Panc1 (cell line): ENCODE measurements at regions of chr20 and their contacts with region 1.

Region 1: DNA sequence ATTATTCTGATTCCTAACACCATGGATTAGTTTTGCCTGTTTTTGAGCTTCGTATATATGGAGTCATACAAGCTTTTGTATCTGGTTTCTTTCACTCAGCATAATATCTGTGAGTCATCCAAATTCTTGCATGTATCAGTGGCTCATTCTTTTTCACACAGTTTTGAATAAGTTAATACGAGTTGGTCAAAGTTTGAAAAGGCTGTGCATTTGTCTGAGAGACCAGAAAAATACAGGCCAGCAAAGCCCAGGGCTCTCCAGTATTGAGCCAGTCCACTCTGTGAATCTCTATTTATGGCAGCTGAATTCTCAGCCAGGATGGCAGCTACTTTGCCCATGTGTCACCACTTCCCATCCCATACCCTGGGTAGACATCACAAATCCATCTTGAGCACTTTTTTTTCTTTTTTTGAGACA is 7.2 kb upstream of the CHMP4B start:
- DNase-seq: no peak
- ATAC-seq: peak; percentile 65; the same call in 1 of the 2 replicates
- H3K4me3 ChIP-seq: no peak overlapping the region
- H3K27ac ChIP-seq: no peak overlapping the region
- H3K4me1 ChIP-seq: no peaks in the 10 kb centered on the region
- H3K27me3 ChIP-seq: no peaks in the 10 kb centered on the region
- CTCF ChIP-seq: no peak

Region 2: GRCh38 chr20:33475381-33476150 is 328.4 kb before region 1 on chr20:
- CTCF ChIA-PET with region 1: no interaction called
- POLR2A ChIA-PET with region 1: interaction called, 12 read pairs
- in situ Hi-C with region 1: no loop called
- intact Hi-C with region 1: no loop called
- DNase-seq: no peak
- ATAC-seq: no peak
- H3K4me3 ChIP-seq: no peak overlapping the region
- H3K27ac ChIP-seq: no peak overlapping the region
- H3K4me1 ChIP-seq: no peaks in the 10 kb centered on the region
- H3K27me3 ChIP-seq: no peaks in the 10 kb centered on the region
- CTCF ChIP-seq: no peak

Region 3: GRCh38 chr20:33781133-33781532 is 22.8 kb before region 1 on chr20:
- CTCF ChIA-PET with region 1: no interaction called
- POLR2A ChIA-PET with region 1: interaction called, 14 read pairs
- in situ Hi-C with region 1: no loop called
- intact Hi-C with region 1: no loop called
- DNase-seq: no peak
- ATAC-seq: no peak
- H3K4me3 ChIP-seq: no peak overlapping the region
- H3K27ac ChIP-seq: no peak overlapping the region
- H3K4me1 ChIP-seq: no peaks in the 10 kb centered on the region
- H3K27me3 ChIP-seq: no peaks in the 10 kb centered on the region
- CTCF ChIP-seq: no peak